CD4-positive, alpha-beta memory T cell (primary cell): ENCODE measurements at regions of chr7 and their contacts with region 1.

Region 1: DNA sequence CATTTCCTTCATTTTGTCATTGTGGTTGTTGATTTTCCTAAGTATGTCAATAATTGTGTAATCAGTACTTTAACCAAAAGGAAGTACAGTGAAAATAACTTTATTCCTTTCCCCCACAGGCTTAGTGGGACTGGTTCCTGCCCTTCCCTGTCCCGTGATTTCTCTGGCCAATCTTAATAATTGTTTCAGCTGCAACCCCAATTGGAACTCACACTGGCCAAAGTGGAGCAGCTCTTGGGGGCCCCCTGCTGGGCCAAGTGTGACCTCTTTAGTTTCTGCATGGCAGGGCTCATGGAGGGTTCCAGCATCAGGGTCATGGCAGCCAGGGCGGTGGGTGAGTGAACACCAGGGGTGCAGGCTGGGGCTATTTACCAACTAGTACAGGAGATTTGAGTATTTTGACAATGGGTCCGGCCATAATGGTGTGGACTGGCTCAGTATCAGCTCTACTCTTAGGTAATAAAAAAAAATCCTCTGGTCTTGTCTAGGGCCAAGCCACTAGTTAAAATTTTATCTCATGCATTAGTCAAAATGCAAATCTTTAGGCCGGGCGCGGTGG is 31.7 kb downstream of the CYCS start:
- DNase-seq: peak; percentile 63 to 71 (median 68)
- H3K4me3 ChIP-seq: no peak overlapping the region
- H3K4me3 Mint-ChIP-seq: no peak overlapping the region
- H3K27ac ChIP-seq: no peak overlapping the region
- H3K27ac Mint-ChIP-seq: peak overlapping the region in 2 of 7 donors; percentile 6 to 74
- H3K4me1 ChIP-seq: peaks cover 3% of the 10 kb centered on the region
- H3K4me1 Mint-ChIP-seq: peaks cover 6 to 14% (median 8%) of the 10 kb centered on the region in 4 donors
- H3K27me3 ChIP-seq: no peaks in the 10 kb centered on the region
- H3K27me3 Mint-ChIP-seq: peaks cover 0 to 3% of the 10 kb centered on the region in 2 donors

Region 2: GRCh38 chr7:23546897-23547572 is 1546.3 kb before region 1 on chr7:
- CTCF ChIA-PET with region 1: no interaction called
- POLR2A ChIA-PET with region 1: no interaction called
- intact Hi-C with region 1: loop called (anchors 10 kb)
- DNase-seq: peak; percentile 78 to 85 (median 84)
- H3K4me3 ChIP-seq: no peak overlapping the region
- H3K4me3 Mint-ChIP-seq: peak overlapping the region in 1 of 8 donors; percentile 39
- H3K27ac ChIP-seq: no peak overlapping the region
- H3K27ac Mint-ChIP-seq: peak overlapping the region in 5 of 7 donors; percentile 0 to 68 (median 51)
- H3K4me1 ChIP-seq: no peaks in the 10 kb centered on the region
- H3K4me1 Mint-ChIP-seq: peaks cover 5 to 7% (median 6%) of the 10 kb centered on the region in 4 donors
- H3K27me3 ChIP-seq: no peaks in the 10 kb centered on the region
- H3K27me3 Mint-ChIP-seq: no peaks in the 10 kb centered on the region

Region 3: GRCh38 chr7:24800667-24801066 is 292.7 kb before region 1 on chr7:
- CTCF ChIA-PET with region 1: interaction called, 414 read pairs
- POLR2A ChIA-PET with region 1: no interaction called
- intact Hi-C with region 1: no loop called
- DNase-seq: no peak
- H3K4me3 ChIP-seq: no peak overlapping the region
- H3K4me3 Mint-ChIP-seq: peak overlapping the region in 1 of 8 donors; percentile 40
- H3K27ac ChIP-seq: no peak overlapping the region
- H3K27ac Mint-ChIP-seq: peak overlapping the region in 1 of 7 donors; percentile 13
- H3K4me1 ChIP-seq: peaks cover 4% of the 10 kb centered on the region
- H3K4me1 Mint-ChIP-seq: peaks cover 7 to 12% (median 8%) of the 10 kb centered on the region in 4 donors
- H3K27me3 ChIP-seq: no peaks in the 10 kb centered on the region
- H3K27me3 Mint-ChIP-seq: no peaks in the 10 kb centered on the region

Region 4: DNA sequence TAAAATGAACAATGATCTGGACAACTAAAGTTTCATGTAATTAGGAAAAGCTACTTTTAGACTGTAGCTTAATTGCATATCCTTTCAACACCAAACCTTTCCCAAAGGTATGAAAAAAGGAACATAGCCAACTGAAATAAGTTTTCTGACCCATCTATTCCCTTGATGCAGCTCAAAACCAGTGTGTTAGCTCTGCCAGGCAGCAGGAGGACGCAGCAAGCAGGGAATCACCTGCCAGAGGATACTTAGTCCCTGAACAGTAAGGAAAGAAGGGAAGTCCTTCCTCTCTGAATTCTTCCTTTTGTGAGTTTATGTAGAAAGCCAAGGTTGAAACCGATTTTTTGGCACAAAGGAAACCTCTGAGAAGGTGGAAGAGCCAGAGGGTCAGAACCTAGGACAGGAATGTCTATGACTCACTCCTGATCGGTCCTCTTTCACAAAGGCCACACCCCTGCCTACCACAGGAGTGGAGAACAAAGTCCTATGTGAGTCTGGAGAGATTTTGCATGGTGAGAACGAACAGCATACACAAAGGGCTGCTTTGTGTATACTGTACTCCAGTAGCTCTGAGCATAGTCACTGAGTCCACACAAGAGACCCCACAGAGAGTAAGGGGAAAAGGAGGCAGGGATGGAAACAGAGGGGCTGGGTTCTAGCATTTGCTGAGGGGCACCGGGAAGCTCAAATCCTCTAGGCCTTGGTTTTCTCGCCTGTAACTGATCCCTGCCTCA is 267.3 kb before region 1 on chr7:
- CTCF ChIA-PET with region 1: interaction called, 80 read pairs
- POLR2A ChIA-PET with region 1: interaction called, 31 read pairs
- intact Hi-C with region 1: no loop called
- DNase-seq: no peak
- H3K4me3 ChIP-seq: peak overlapping the region in 1 of 2 donors; percentile 21
- H3K4me3 Mint-ChIP-seq: peak overlapping the region in 7 of 8 donors; percentile 56 to 89 (median 76)
- H3K27ac ChIP-seq: peak overlapping the region; percentile 45
- H3K27ac Mint-ChIP-seq: peak overlapping the region; percentile 87 to 96 (median 91)
- H3K4me1 ChIP-seq: peaks cover 62% of the 10 kb centered on the region
- H3K4me1 Mint-ChIP-seq: peaks cover 51 to 72% (median 65%) of the 10 kb centered on the region in 4 donors
- H3K27me3 ChIP-seq: no peaks in the 10 kb centered on the region
- H3K27me3 Mint-ChIP-seq: no peaks in the 10 kb centered on the region

Region 5: DNA sequence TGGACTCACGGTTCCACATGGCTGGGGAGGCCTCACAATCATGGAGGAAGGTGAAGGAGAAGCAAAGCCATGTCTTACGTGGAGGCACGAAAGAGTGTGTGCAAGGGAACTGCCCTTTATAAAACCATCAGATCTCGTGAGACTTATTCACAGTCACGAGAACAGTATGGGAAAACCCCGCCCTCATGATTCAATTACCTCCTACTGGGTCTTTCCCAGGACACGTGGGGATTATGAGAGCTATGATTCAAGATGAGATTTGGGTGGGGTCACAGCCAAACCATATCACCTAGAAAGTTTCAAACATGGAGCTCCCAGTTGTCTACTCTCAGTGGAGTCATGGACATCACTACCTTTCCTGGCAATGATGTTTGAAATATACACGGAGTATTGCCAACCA is 17.9 kb before region 1 on chr7:
- CTCF ChIA-PET with region 1: interaction called, 33 read pairs
- POLR2A ChIA-PET with region 1: interaction called, 4 read pairs
- intact Hi-C with region 1: no loop called
- DNase-seq: no peak
- H3K4me3 ChIP-seq: no peak overlapping the region
- H3K4me3 Mint-ChIP-seq: no peak overlapping the region
- H3K27ac ChIP-seq: no peak overlapping the region
- H3K27ac Mint-ChIP-seq: no peak overlapping the region
- H3K4me1 ChIP-seq: no peaks in the 10 kb centered on the region
- H3K4me1 Mint-ChIP-seq: no peaks in the 10 kb centered on the region
- H3K27me3 ChIP-seq: no peaks in the 10 kb centered on the region
- H3K27me3 Mint-ChIP-seq: peaks cover 2 to 4% of the 10 kb centered on the region in 2 donors

Region 6: DNA sequence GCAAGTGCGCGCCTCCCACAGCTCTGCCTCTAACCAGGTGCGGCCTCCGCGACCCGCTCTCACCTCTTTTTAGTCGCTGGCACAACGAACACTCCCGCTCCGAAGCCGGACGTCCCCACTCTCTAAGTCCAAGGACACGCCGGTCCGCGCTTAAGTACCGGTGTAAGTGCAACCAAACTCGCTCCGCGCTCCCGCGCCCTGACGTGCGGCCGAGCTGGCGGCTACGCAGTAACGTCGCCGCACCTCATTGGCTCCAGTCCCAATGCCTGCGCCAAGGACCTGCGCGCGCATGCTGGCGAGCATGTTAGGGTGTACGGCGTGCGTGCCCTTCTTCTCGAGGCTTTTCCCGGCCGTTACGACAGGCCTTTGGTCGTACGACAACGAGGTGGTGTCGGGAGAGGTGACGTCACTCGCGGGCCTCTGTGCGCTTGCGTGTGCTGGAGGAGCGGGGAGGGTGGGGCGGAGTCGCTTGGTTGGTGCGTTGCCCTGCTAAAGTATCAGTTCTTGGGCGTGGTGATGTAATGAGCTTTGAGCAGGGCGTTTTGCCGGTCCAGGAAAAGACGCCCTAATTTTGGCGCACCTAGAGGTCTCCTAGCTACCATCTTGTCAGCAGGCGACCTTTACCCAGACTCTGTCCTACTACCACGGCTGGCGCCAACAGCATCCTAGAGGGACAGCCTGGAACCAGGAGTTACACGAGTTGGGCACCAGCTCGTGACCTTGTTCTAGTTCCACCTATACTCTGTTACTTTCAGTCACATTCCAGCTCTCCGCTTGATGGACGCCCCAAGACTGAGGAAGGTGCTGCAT is 32.0 kb after region 1 on chr7 and contains the start of gene CYCS:
- CTCF ChIA-PET with region 1: interaction called, 18 read pairs
- POLR2A ChIA-PET with region 1: interaction called, 3 read pairs
- intact Hi-C with region 1: loop called (anchors 1 kb)
- DNase-seq: peak; percentile 99 to 100 (median 99)
- H3K4me3 ChIP-seq: peak within 1 kb of the TSS; percentile 72 to 82
- H3K4me3 Mint-ChIP-seq: peak within 1 kb of the TSS; percentile 97 to 100 (median 100)
- H3K27ac ChIP-seq: peak within 1 kb of the TSS; percentile 97
- H3K27ac Mint-ChIP-seq: peak within 1 kb of the TSS; percentile 96 to 100 (median 100)
- H3K4me1 ChIP-seq: peaks cover 9% of the 10 kb centered on the region
- H3K4me1 Mint-ChIP-seq: peaks cover 14 to 26% (median 15%) of the 10 kb centered on the region in 4 donors
- H3K27me3 ChIP-seq: no peaks in the 10 kb centered on the region
- H3K27me3 Mint-ChIP-seq: no peaks in the 10 kb centered on the region
- total RNA-seq, gene CYCS: 46.9 to 54.2 TPM